Activated B cell treated with CpG ODN at 0.5 μM for 24 hours (primary cell): ENCODE measurements at regions of chr12 and their contacts with region 1.

Region 1: GRCh38 chr12:6723607-6724396 is at the start of gene COPS7A:
- DNase-seq: peak; percentile 92
- ATAC-seq: peak; percentile 93
- H3K4me3 Mint-ChIP-seq: peak within 1 kb of the TSS; percentile 89
- H3K27ac Mint-ChIP-seq: peak within 1 kb of the TSS; percentile 96
- H3K4me1 Mint-ChIP-seq: peaks cover 19% of the 10 kb centered on the region
- H3K27me3 Mint-ChIP-seq: no peaks in the 10 kb centered on the region
- CTCF ChIP-seq: no peak
- total RNA-seq, gene COPS7A: 28.1 and 35.8 TPM in 2 replicates

Region 2: GRCh38 chr12:6533923-6534694 is 189.7 kb before region 1 on chr12 and contains the start of gene GAPDH:
- CTCF ChIA-PET with region 1: no interaction called
- POLR2A ChIA-PET with region 1: interaction called, 12 read pairs
- intact Hi-C with region 1: no loop called
- DNase-seq: peak; percentile 75
- ATAC-seq: peak; percentile 70
- H3K4me3 Mint-ChIP-seq: peak within 1 kb of the TSS; percentile 94
- H3K27ac Mint-ChIP-seq: peak within 1 kb of the TSS; percentile 93
- H3K4me1 Mint-ChIP-seq: peaks cover 47% of the 10 kb centered on the region
- H3K27me3 Mint-ChIP-seq: no peaks in the 10 kb centered on the region
- CTCF ChIP-seq: no peak
- total RNA-seq, gene GAPDH: 1,003 and 1,033 TPM in 2 replicates

Region 3: GRCh38 chr12:6613776-6614512 is 109.9 kb before region 1 on chr12:
- CTCF ChIA-PET with region 1: interaction called, 4 read pairs
- POLR2A ChIA-PET with region 1: interaction called, 33 read pairs
- intact Hi-C with region 1: loop called (anchors 1 kb)
- DNase-seq: peak; percentile 28
- ATAC-seq: peak; percentile 36
- H3K4me3 Mint-ChIP-seq: no peak overlapping the region
- H3K27ac Mint-ChIP-seq: peak overlapping the region; percentile 88
- H3K4me1 Mint-ChIP-seq: peaks cover 75% of the 10 kb centered on the region
- H3K27me3 Mint-ChIP-seq: no peaks in the 10 kb centered on the region
- CTCF ChIP-seq: no peak

Region 4: DNA sequence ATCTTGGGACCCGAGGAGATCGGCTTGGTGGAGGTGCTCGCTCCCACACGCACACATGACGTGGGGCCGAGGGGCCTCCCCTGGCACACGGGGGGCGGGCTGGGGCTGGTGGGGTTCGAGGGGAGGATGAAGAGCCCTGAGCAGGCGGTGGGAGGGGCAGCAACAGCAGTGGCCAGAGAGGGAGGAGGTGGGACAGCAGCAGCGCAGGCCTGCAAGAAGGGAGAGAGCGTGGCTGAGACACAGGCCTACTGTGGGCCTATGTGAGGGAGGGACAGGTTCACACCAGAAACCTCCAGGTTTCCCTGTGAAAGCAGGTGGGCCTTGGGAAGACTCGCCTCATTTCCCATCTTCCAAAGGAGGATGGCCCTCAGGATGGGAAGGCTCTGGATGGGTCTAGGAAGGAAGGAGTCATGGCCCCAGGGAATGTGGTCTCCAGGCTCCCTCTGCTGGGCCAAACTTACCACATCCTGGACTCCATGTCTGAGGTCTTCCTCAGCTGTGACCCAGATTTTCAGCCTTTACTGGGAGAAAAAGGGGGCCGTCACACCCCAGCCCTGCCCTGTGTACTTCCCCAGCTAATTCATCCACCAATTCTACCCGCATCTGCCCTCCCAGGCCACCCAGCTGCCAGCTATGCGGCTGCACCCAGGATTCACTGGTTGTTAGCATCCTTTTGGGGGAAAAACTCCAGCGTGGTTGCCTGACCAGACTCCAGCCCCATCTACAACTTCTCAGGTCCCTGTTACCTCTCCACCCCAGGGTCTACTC is 26.0 kb before region 1 on chr12:
- CTCF ChIA-PET with region 1: interaction called, 5 read pairs
- POLR2A ChIA-PET with region 1: interaction called, 76 read pairs
- intact Hi-C with region 1: loop called (anchors 2 kb)
- DNase-seq: no peak
- ATAC-seq: no peak
- H3K4me3 Mint-ChIP-seq: peak overlapping the region; percentile 42
- H3K27ac Mint-ChIP-seq: peak overlapping the region; percentile 74
- H3K4me1 Mint-ChIP-seq: peaks cover 60% of the 10 kb centered on the region
- H3K27me3 Mint-ChIP-seq: peaks cover 18% of the 10 kb centered on the region
- CTCF ChIP-seq: no peak

Region 5: DNA sequence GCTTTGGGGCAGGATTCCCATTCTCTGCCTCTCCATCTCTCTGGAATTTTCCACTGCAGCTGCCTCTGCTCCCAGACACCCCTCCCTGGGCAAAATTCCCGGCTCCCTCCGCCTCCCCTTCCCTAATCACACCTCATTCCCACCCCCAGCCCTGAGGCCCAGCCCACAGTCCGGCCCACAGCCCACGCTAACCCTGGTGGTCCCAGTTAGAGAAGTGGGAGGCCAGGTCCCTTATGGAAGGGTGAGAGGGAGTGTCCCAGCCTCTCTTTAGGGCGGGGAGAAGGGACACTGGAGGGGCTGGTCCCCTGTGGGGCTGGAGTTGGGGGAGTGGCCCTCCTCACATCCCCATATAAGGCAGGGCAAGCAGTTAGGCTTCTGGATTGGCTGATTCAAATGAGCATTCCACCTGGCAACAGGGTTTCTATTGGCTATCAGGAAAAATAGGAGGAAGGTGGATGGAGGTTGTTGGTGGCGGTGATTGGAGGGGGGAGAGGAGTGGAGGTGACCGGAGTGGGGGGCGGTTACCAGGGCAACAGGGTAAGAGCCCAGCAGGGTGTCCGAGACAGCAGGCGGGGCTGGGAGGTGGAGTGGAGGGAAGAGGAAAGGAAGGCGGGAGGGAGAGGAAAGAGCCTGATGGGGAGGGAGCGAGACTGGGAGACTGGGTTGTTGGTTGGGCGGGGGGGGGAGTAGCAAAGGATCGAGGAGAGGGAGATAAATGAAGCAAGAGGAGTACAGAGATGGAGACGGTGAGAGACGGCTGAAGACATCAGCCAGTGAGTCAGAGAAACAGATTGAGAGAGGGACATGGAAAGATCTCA is 40.4 kb after region 1 on chr12:
- CTCF ChIA-PET with region 1: interaction called, 12 read pairs
- POLR2A ChIA-PET with region 1: interaction called, 3 read pairs
- intact Hi-C with region 1: no loop called
- DNase-seq: peak; percentile 26
- ATAC-seq: peak; percentile 83
- H3K4me3 Mint-ChIP-seq: peak overlapping the region; percentile 55
- H3K27ac Mint-ChIP-seq: no peak overlapping the region
- H3K4me1 Mint-ChIP-seq: peaks cover 29% of the 10 kb centered on the region
- H3K27me3 Mint-ChIP-seq: peaks cover 31% of the 10 kb centered on the region
- CTCF ChIP-seq: no peak

Region 6: GRCh38 chr12:6944381-6945186 is 220.8 kb after region 1 on chr12:
- CTCF ChIA-PET with region 1: no interaction called
- POLR2A ChIA-PET with region 1: interaction called, 14 read pairs
- intact Hi-C with region 1: no loop called
- DNase-seq: peak; percentile 80
- ATAC-seq: peak; percentile 41
- H3K4me3 Mint-ChIP-seq: peak overlapping the region; percentile 91
- H3K27ac Mint-ChIP-seq: peak overlapping the region; percentile 96
- H3K4me1 Mint-ChIP-seq: peaks cover 72% of the 10 kb centered on the region
- H3K27me3 Mint-ChIP-seq: no peaks in the 10 kb centered on the region
- CTCF ChIP-seq: peak; percentile 59